Activated B cell treated with CpG ODN at 0.5 μM for 24 hours (primary cell): ENCODE measurements at regions of chr18 and their contacts with region 1.

Region 1: DNA sequence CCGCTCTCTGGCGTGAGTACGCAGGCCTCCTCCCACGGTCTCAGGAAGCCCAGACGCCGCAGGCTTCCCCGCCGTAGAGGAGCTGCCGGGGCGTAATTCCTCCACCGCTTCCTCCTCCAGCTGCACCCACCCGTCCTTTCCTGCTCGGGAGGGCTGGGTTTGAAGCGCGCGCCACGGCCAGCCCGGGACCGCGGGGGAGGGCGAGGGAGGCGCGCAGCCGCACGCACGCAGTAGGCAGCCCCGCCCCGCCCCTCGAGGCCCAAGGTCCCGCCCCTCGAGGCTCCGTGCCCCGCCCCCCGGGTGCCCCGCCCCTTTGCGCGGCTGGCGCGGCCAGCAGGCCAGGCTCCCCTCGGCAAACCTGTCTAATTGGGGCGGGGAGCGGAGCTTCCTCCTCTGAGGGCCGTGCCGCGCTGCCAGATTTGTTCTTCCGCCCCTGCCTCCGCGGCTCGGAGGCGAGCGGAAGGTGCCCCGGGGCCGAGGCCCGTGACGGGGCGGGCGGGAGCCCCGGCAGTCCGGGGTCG is at the start of gene MALT1:
- DNase-seq: peak; percentile 98
- ATAC-seq: peak; percentile 89
- H3K4me3 Mint-ChIP-seq: peak within 1 kb of the TSS; percentile 95
- H3K27ac Mint-ChIP-seq: peak within 1 kb of the TSS; percentile 95
- H3K4me1 Mint-ChIP-seq: peaks cover 74% of the 10 kb centered on the region
- H3K27me3 Mint-ChIP-seq: no peaks in the 10 kb centered on the region
- CTCF ChIP-seq: no peak
- total RNA-seq, gene MALT1: 61.6 and 75.6 TPM in 2 replicates

Region 2: DNA sequence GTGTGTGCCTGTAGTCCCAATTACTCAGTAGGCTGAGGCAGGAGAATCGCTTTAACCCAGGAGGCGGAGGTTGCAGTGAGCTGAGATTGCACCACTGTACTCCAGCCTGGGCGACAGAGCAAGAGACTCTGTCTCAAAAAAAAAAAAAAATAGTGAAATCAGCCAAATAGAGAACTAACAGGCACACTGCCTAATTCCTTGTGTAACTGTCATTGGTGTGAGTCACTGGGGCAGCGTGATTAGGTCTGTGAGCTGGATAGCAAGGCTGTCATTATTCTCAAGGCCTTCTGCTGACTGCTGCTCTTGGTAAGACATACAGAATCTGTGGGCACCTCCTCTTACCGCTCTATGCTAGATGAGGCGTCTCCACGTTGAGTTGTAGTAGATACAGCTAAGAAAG is 356.9 kb before region 1 on chr18:
- CTCF ChIA-PET with region 1: no interaction called
- POLR2A ChIA-PET with region 1: no interaction called
- intact Hi-C with region 1: no loop called
- DNase-seq: no peak
- ATAC-seq: no peak
- H3K4me3 Mint-ChIP-seq: no peak overlapping the region
- H3K27ac Mint-ChIP-seq: no peak overlapping the region
- H3K4me1 Mint-ChIP-seq: peaks cover 34% of the 10 kb centered on the region
- H3K27me3 Mint-ChIP-seq: no peaks in the 10 kb centered on the region
- CTCF ChIP-seq: no peak

Region 3: DNA sequence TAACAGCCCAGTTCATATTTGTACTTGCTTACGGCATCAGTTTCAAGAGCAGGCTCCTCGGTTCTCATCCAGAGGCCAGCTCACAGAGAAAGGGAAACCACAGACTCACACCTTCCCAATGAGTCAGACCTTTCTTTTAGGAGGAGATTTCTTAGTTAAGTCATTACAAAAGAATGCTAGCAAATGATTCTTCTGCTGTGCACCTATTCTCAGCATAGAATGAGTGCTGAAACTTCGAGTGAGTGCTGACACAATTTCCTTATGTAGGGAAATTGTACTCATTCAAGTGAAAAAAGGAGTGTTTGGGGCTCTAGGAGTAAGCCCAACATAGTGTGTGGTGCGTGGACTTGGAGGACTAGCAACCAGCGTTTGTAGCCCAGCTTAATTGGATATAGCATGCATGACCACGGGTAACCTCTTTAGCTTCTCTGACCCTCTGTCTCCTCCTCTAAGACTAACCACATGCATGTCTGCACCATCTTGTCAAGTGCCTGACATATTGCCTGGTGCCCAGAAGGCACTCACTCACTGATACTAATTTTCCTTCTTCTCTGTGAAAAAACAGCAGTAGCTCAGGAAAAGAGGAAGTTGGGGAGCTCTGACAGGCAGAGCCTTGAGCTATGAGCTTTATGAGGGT is 129.3 kb before region 1 on chr18:
- CTCF ChIA-PET with region 1: interaction called, 9 read pairs
- POLR2A ChIA-PET with region 1: interaction called, 93 read pairs
- intact Hi-C with region 1: no loop called
- DNase-seq: no peak
- ATAC-seq: peak; percentile 58
- H3K4me3 Mint-ChIP-seq: peak overlapping the region; percentile 55
- H3K27ac Mint-ChIP-seq: peak overlapping the region; percentile 65
- H3K4me1 Mint-ChIP-seq: peaks cover 62% of the 10 kb centered on the region
- H3K27me3 Mint-ChIP-seq: no peaks in the 10 kb centered on the region
- CTCF ChIP-seq: no peak

Region 4: GRCh38 chr18:58605027-58606020 is 65.8 kb before region 1 on chr18:
- CTCF ChIA-PET with region 1: no interaction called
- POLR2A ChIA-PET with region 1: interaction called, 5 read pairs
- intact Hi-C with region 1: loop called (anchors 2 kb)
- DNase-seq: no peak
- ATAC-seq: peak; percentile 51
- H3K4me3 Mint-ChIP-seq: no peak overlapping the region
- H3K27ac Mint-ChIP-seq: no peak overlapping the region
- H3K4me1 Mint-ChIP-seq: peaks cover 31% of the 10 kb centered on the region
- H3K27me3 Mint-ChIP-seq: no peaks in the 10 kb centered on the region
- CTCF ChIP-seq: no peak

Region 5: DNA sequence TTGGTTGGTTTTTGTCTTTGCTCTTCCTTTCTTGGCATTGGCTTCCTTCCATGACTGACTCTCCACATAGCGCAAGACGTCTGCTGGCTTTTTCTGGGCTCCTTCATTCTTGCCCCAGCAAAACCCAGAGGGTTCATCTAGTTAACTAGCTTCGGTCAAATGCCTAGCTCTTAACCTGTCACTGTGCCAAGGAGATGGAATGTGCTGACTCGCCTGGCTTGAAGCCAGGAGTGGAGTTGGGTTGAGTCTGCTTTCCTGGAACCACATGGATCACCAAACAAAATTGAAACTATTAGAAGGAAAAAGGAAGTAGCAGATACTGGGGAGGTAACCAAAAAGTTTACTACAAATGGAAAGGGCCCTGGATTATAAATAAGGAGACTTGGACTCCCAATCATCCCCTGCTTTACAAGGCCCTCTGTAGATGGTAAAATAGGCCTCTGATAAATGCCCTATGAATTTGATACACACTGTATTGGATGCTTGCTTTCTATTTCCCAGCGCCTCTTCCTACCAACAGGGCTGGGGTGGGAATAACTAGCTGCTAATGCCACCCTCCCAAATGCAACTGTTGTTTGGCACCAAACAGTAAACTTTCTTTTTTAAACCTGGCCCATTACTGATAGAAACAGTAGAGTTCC is 11.4 kb after region 1 on chr18:
- CTCF ChIA-PET with region 1: interaction called, 5 read pairs
- POLR2A ChIA-PET with region 1: interaction called, 13 read pairs
- intact Hi-C with region 1: no loop called
- DNase-seq: no peak
- ATAC-seq: no peak
- H3K4me3 Mint-ChIP-seq: no peak overlapping the region
- H3K27ac Mint-ChIP-seq: no peak overlapping the region
- H3K4me1 Mint-ChIP-seq: peaks cover 34% of the 10 kb centered on the region
- H3K27me3 Mint-ChIP-seq: no peaks in the 10 kb centered on the region
- CTCF ChIP-seq: no peak

Region 6: GRCh38 chr18:58761241-58761969 is 90.2 kb after region 1 on chr18:
- CTCF ChIA-PET with region 1: interaction called, 19 read pairs
- POLR2A ChIA-PET with region 1: interaction called, 7 read pairs
- intact Hi-C with region 1: loop called (anchors 5 kb)
- DNase-seq: no peak
- ATAC-seq: peak; percentile 43
- H3K4me3 Mint-ChIP-seq: no peak overlapping the region
- H3K27ac Mint-ChIP-seq: peak overlapping the region; percentile 20
- H3K4me1 Mint-ChIP-seq: peaks cover 27% of the 10 kb centered on the region
- H3K27me3 Mint-ChIP-seq: peaks cover 6% of the 10 kb centered on the region
- CTCF ChIP-seq: no peak